ENCODE measurements at regions of chr1 and their contacts with region 1.

Region 1: GRCh38 chr1:151729966-151730291 is 8.6 kb downstream of the RIIAD1 start:
- DNase-seq: no peak
- ATAC-seq: no peak
- H3K4me3 ChIP-seq: no peak overlapping the region
- H3K27ac ChIP-seq: no peak overlapping the region
- H3K4me1 ChIP-seq: no peaks in the 10 kb centered on the region
- H3K27me3 ChIP-seq: peaks cover 0 to 3% (median 0%) of the 10 kb centered on the region in 3 donors
- CTCF ChIP-seq: no peak

Region 2: DNA sequence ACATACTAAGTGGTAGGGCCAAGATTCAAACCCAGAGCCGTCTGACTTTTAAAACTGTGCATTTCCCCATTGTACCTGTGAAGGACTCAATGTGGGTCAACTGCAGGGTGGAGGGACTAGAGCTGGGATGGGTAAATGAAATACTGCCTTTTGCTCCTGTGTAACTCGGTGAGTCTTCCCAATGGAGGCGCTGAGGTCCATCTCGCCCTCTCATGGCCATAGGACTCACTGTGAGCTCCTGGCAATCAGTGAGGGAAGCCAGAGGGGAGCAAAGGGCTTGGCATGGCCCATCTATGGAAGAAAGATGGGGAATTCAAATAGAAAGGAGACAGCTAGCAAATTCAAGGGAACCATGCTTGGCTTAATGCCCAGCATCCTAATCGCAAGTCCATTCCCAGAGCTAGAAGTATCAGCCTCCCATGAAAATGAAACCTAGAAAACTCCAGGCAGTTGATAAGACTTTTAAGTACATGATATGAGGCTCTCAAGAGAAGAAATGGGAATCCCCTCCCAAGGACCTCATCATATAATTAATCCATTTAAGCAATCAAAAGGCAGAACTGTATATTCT is 244.2 kb before region 1 on chr1:
- intact Hi-C with region 1: no loop called
- DNase-seq: no peak
- ATAC-seq: no peak
- H3K4me3 ChIP-seq: no peak overlapping the region
- H3K27ac ChIP-seq: no peak overlapping the region
- H3K4me1 ChIP-seq: no peaks in the 10 kb centered on the region
- H3K27me3 ChIP-seq: no peaks in the 10 kb centered on the region
- CTCF ChIP-seq: no peak

Region 3: DNA sequence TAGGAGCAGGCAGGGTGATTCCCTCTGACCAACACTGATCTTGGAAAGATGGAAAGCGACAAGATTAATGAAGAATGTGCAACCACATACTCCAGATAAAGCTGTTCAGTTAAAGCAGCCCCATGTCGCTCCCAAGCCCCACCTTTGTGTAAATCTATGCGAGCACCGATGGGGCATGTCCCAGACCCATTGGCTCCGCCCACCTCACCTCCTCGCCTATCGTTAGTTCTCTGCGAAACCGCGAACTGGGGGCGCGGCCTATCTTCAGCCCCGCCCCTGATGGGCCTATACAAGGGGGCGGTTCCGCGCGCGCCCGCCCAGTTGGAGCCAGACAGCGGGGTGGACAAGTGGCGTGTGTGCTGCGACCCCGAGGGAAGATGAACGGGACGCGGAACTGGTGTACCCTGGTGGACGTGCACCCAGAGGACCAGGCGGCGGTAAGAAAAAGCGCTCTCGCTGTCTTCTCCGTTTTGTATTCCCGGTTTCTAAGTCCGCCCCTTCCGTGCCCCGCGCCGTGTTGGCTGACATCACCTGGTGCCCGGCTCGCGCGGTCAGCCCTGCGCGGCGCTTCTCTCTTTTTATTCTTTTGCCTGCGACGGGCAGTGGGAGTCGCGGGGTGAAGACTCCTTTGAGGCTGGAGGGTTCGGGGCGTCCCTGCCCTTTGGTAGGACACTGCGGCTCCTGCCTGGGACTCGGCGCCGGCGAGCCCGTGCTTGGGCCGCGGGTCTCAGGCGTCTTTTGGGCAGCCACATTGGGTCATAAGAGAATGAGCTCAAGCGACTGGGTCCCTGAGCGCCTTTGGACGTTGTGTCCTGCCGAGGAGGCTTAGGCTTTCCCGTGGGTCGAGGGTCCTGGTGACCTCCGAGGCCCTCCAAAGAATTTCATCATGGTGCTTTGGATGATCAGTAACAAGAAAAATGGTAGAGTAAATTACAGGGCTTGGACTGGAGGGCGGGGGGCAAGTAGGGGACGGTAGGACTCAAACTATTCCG is 189.6 kb before region 1 on chr1 and contains the start of gene TUFT1:
- intact Hi-C with region 1: loop called (anchors 5 kb)
- DNase-seq: peak; percentile 91 to 95
- ATAC-seq: peak; percentile 92 to 97 (median 94)
- H3K4me3 ChIP-seq: peak within 1 kb of the TSS; percentile 90
- H3K27ac ChIP-seq: peak within 1 kb of the TSS; percentile 81
- H3K4me1 ChIP-seq: peaks cover 9% of the 10 kb centered on the region
- H3K27me3 ChIP-seq: no peaks in the 10 kb centered on the region
- CTCF ChIP-seq: no peak
- total RNA-seq, gene TUFT1: 0.97 to 5.3 (median 1.7) TPM

Region 4: GRCh38 chr1:151693076-151693651 is 36.8 kb before region 1 on chr1:
- intact Hi-C with region 1: loop called in 1 of 2 experiments (anchors 5 kb)
- DNase-seq: no peak
- ATAC-seq: no peak
- H3K4me3 ChIP-seq: no peak overlapping the region
- H3K27ac ChIP-seq: no peak overlapping the region
- H3K4me1 ChIP-seq: no peaks in the 10 kb centered on the region
- H3K27me3 ChIP-seq: no peaks in the 10 kb centered on the region
- CTCF ChIP-seq: peak; percentile 42

Measured in psoas muscle (tissue), 8 donors.